ENCODE measurements at regions of chr5 and their contacts with region 1.

Region 1: DNA sequence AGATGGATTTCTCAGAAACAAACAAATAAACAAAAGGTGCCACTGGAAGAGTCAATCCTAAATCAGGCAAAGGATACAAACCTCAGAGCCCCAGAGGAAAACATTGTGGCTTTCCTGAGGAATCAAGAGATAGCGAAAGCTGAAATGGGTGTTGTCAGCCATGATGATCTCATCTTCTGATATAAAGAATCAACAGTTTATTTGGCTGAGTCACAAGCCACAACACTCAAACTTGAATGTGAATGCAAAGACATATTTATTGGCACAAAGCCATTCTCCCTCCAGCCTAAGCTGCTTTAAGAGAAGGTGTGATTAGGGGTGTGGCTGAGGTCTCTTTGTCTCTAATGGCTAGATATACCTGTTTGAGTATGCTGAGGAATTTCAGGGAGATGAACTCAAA is 73.3 kb upstream of the NREP start:
- DNase-seq: peak; percentile 98
- ATAC-seq: peak; percentile 89
- H3K4me3 ChIP-seq: no peak overlapping the region
- H3K27ac ChIP-seq: peak overlapping the region; percentile 33
- H3K4me1 ChIP-seq: peaks cover 15% of the 10 kb centered on the region
- H3K27me3 ChIP-seq: no peaks in the 10 kb centered on the region
- CTCF ChIP-seq: no peak

Region 2: DNA sequence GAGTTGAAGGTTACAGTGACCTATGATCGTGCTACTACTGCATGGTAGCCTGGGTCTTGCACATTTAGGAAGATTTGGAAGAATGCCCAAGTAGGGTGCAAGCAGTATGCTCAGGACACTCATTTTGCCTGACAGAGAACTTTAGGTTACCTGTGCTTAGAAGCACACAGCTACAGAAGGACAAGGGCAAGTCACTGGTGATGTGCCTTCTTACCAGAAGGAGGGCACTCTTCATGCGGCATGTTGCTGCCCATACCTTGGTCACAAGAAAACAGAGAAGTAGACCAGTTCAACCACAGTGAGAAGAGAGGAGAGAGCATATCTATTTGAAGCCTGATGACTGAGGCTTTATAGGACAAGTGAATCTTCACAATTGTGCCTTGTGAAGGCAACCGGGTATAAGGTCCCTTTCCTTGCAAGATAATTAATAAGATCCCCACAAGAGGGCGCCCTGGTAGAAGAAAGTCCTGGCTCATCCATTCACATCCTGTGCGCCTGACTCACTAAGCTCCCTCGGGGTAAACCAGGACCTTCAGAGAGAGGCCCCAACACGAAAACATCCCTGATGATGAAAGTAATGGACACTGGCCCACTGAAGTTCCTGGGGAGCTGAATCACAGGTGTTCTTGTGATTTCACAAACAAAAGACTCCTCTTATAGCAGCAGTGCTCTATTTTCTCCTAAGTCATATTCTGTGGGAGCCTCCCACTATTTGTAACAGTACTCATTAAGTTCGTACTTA is 279.9 kb before region 1 on chr5:
- CTCF ChIA-PET with region 1: no interaction called
- POLR2A ChIA-PET with region 1: no interaction called
- intact Hi-C with region 1: loop called (anchors 5 kb)
- DNase-seq: peak; percentile 97
- ATAC-seq: peak; percentile 89
- H3K4me3 ChIP-seq: no peak overlapping the region
- H3K27ac ChIP-seq: peak overlapping the region; percentile 54
- H3K4me1 ChIP-seq: peaks cover 21% of the 10 kb centered on the region
- H3K27me3 ChIP-seq: no peaks in the 10 kb centered on the region
- CTCF ChIP-seq: peak; percentile 80

Measured in PC-3 (cell line).